Activated naive CD8-positive, alpha-beta T cell treated with anti-CD3 and anti-CD28 coated beads, Interleukin-2, amount 10 ng/mL, durations not matched to agents 7 days and 5 days (primary cell): ENCODE measurements at regions of chr14 and their contacts with region 1.

Region 1: GRCh38 chr14:74762917-74763802 is at the start of gene YLPM1:
- DNase-seq: peak; percentile 90
- ATAC-seq: peak; percentile 93
- H3K4me3 Mint-ChIP-seq: peak within 1 kb of the TSS; percentile 93
- H3K27ac Mint-ChIP-seq: peak within 1 kb of the TSS; percentile 90
- H3K4me1 Mint-ChIP-seq: peaks cover 32% of the 10 kb centered on the region
- H3K27me3 Mint-ChIP-seq: no peaks in the 10 kb centered on the region
- total RNA-seq, gene YLPM1: 71.7 to 74.4 TPM

Region 2: DNA sequence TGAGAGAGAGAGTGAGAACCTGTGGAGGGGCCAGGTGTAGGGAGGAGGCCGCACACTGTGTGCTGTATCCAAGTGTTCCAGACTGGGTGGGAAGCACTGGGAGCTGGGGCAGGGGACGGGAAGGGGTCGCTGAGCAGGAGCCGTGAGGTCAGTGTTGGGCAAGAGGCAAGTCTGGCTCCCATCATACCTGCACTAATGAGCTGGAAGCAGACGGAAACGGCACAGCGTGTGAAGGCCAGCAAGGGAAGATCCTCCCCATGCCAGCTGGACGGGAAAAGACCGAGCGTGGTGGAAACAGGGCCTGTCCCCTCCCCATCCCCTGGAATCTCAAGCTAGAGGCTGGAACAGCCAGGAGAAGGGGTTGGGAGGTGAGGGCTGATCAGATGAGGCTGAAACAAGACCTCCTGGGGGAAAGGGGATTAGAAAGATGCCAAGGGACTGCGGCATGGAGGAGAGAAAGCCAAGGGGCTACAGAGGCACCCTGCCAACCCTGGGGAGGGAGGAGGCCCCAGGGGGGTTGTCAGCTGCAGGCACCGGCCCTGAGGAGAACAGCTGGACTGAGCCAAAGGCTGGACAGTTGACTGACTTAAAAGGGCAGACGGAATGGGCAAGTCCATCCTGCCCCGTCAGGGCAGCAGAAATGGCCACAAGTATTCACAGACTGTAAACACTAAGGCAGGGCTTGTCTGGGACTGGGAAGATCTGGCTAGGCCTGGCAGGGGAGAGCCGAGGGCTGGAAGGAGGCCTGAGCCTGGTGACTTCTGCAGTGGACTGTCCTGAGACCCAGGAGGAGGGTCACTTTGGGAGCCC is 132.1 kb before region 1 on chr14:
- POLR2A ChIA-PET with region 1: no interaction called
- DNase-seq: no peak
- ATAC-seq: no peak
- H3K4me3 Mint-ChIP-seq: no peak overlapping the region
- H3K27ac Mint-ChIP-seq: no peak overlapping the region
- H3K4me1 Mint-ChIP-seq: peaks cover 2% of the 10 kb centered on the region
- H3K27me3 Mint-ChIP-seq: peaks cover 16% of the 10 kb centered on the region

Region 3: DNA sequence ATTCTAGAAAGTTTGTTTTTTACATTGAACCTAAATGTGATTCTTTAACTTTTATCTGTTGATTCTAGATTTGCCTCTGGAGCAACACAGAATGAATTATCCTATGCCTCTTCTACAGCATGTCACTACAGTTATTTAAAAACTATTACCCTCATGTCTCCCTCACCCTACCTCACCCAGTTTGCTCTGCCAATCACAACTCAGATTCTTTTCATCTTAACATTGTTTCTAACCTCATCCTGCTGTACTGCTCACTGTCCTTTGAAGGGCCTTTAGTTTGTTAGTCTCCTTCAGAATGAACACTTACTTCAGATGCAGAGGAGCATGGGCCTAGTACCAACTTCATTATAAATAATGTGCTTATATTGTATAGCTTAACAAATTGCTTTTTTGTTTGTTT is 21.5 kb after region 1 on chr14:
- POLR2A ChIA-PET with region 1: interaction called, 15 read pairs
- DNase-seq: no peak
- ATAC-seq: peak; percentile 79
- H3K4me3 Mint-ChIP-seq: no peak overlapping the region
- H3K27ac Mint-ChIP-seq: no peak overlapping the region
- H3K4me1 Mint-ChIP-seq: peaks cover 22% of the 10 kb centered on the region
- H3K27me3 Mint-ChIP-seq: no peaks in the 10 kb centered on the region

Region 4: GRCh38 chr14:74807853-74808545 is 44.8 kb after region 1 on chr14:
- POLR2A ChIA-PET with region 1: no interaction called
- DNase-seq: no peak
- ATAC-seq: no peak
- H3K4me3 Mint-ChIP-seq: no peak overlapping the region
- H3K27ac Mint-ChIP-seq: no peak overlapping the region
- H3K4me1 Mint-ChIP-seq: no peaks in the 10 kb centered on the region
- H3K27me3 Mint-ChIP-seq: no peaks in the 10 kb centered on the region

Region 5: GRCh38 chr14:74824997-74825396 is 61.8 kb after region 1 on chr14:
- POLR2A ChIA-PET with region 1: no interaction called
- DNase-seq: no peak
- ATAC-seq: no peak
- H3K4me3 Mint-ChIP-seq: no peak overlapping the region
- H3K27ac Mint-ChIP-seq: no peak overlapping the region
- H3K4me1 Mint-ChIP-seq: peaks cover 4% of the 10 kb centered on the region
- H3K27me3 Mint-ChIP-seq: no peaks in the 10 kb centered on the region